ENCODE measurements at regions of chr15 and their contacts with region 1.

Region 1: GRCh38 chr15:80309769-80310384 is 57.9 kb upstream of the CTXND1 start:
- DNase-seq: no peak
- ATAC-seq: no peak
- H3K4me3 ChIP-seq: no peak overlapping the region
- H3K27ac ChIP-seq: no peak overlapping the region
- H3K4me1 ChIP-seq: no peaks in the 10 kb centered on the region
- H3K27me3 ChIP-seq: no peaks in the 10 kb centered on the region
- CTCF ChIP-seq: peak; percentile 20 to 34 (median 29); a peak in 5 of 6 replicates
- EP300 ChIP-seq: no peak
- POLR2A ChIP-seq: no peak
- RAD21 ChIP-seq: peak; percentile 42

Region 2: GRCh38 chr15:80076321-80077318 is 233.3 kb before region 1 on chr15:
- CTCF ChIA-PET with region 1: no interaction called
- POLR2A ChIA-PET with region 1: no interaction called
- RAD21 ChIA-PET with region 1: no interaction called
- SMC1A ChIA-PET with region 1: no interaction called
- in situ Hi-C with region 1: no loop called
- intact Hi-C with region 1: no loop called
- DNase-seq: no peak
- ATAC-seq: no peak
- H3K4me3 ChIP-seq: no peak overlapping the region
- H3K27ac ChIP-seq: no peak overlapping the region
- H3K4me1 ChIP-seq: 0 out of 2 replicates have a peak, but pooled peaks cover 10% of the 10 kb centered on the region
- H3K27me3 ChIP-seq: no peaks in the 10 kb centered on the region
- CTCF ChIP-seq: no peak
- EP300 ChIP-seq: no peak
- POLR2A ChIP-seq: no peak
- RAD21 ChIP-seq: no peak

Region 3: GRCh38 chr15:80242132-80242769 is 67.6 kb before region 1 on chr15:
- CTCF ChIA-PET with region 1: interaction called, 6 read pairs
- POLR2A ChIA-PET with region 1: no interaction called
- RAD21 ChIA-PET with region 1: interaction called, 4 read pairs
- SMC1A ChIA-PET with region 1: no interaction called
- in situ Hi-C with region 1: no loop called
- intact Hi-C with region 1: loop called (anchors 1 kb)
- DNase-seq: no peak
- ATAC-seq: peak; percentile 85
- H3K4me3 ChIP-seq: no peak overlapping the region
- H3K27ac ChIP-seq: no peak overlapping the region
- H3K4me1 ChIP-seq: no peaks in the 10 kb centered on the region
- H3K27me3 ChIP-seq: no peaks in the 10 kb centered on the region; a peak in 1 of 4 replicates
- CTCF ChIP-seq: peak; percentile 62 to 79 (median 74)
- EP300 ChIP-seq: no peak
- POLR2A ChIP-seq: no peak
- RAD21 ChIP-seq: peak; percentile 55

Region 4: GRCh38 chr15:80418892-80419537 is 109.1 kb after region 1 on chr15:
- CTCF ChIA-PET with region 1: no interaction called
- POLR2A ChIA-PET with region 1: no interaction called
- RAD21 ChIA-PET with region 1: no interaction called
- SMC1A ChIA-PET with region 1: no interaction called
- in situ Hi-C with region 1: no loop called
- intact Hi-C with region 1: no loop called
- DNase-seq: no peak
- ATAC-seq: peak; percentile 69
- H3K4me3 ChIP-seq: no peak overlapping the region
- H3K27ac ChIP-seq: no peak overlapping the region
- H3K4me1 ChIP-seq: no peaks in the 10 kb centered on the region
- H3K27me3 ChIP-seq: no peaks in the 10 kb centered on the region
- CTCF ChIP-seq: peak; percentile 49 to 72 (median 57)
- EP300 ChIP-seq: no peak
- POLR2A ChIP-seq: no peak
- RAD21 ChIP-seq: peak; percentile 20; the same call in 1 of the 2 replicates